T-cell (primary cell): ENCODE measurements at regions of chr5 and their contacts with region 1.

Region 1: DNA sequence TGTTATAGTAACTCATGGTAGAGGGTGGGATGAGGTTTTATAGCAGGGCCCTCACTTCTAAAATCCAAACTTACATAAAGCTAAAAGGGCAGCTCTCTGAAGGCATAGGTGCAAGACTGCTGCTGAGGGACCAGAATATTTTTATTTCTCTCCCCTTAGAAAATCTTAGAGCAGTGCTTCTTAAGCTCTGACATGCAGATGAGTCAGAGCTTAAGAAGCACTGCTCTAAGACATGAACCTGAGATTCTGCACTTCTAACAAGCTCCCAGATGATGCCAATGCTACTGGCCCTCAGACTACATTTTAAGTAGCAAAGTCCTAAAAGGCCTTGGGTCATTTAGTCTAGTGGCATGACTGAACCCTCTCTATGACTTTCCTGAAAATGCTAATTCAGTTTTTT is 97.6 kb upstream of the SPRY4 start:
- DNase-seq: no peak
- ATAC-seq: peak in 1 of 4 experiments; percentile 24
- H3K4me3 ChIP-seq: no peak overlapping the region
- H3K4me3 Mint-ChIP-seq: no peak overlapping the region
- H3K27ac ChIP-seq: no peak overlapping the region
- H3K27ac Mint-ChIP-seq: no peak overlapping the region
- H3K4me1 ChIP-seq: peaks cover 42 to 45% of the 10 kb centered on the region in 2 experiments
- H3K4me1 Mint-ChIP-seq: peaks cover 52 to 79% (median 52%) of the 10 kb centered on the region in 3 donors
- H3K27me3 ChIP-seq: no peaks in the 10 kb centered on the region
- H3K27me3 Mint-ChIP-seq: no peaks in the 10 kb centered on the region

Region 2: GRCh38 chr5:142405814-142406390 is 16.5 kb before region 1 on chr5:
- CTCF ChIA-PET with region 1: interaction called in 1 of 2 experiments, 3 read pairs
- POLR2A ChIA-PET with region 1: interaction called in 1 of 2 experiments, 10 read pairs
- DNase-seq: no peak
- ATAC-seq: no peak
- H3K4me3 ChIP-seq: no peak overlapping the region
- H3K4me3 Mint-ChIP-seq: no peak overlapping the region
- H3K27ac ChIP-seq: no peak overlapping the region
- H3K27ac Mint-ChIP-seq: no peak overlapping the region
- H3K4me1 ChIP-seq: no peaks in the 10 kb centered on the region
- H3K4me1 Mint-ChIP-seq: peaks cover 0 to 4% (median 0%) of the 10 kb centered on the region in 3 donors
- H3K27me3 ChIP-seq: peaks cover 0 to 11% of the 10 kb centered on the region in 2 experiments
- H3K27me3 Mint-ChIP-seq: peaks cover 0 to 1% of the 10 kb centered on the region in 2 donors

Region 3: GRCh38 chr5:142435410-142436115 is 13.1 kb after region 1 on chr5:
- CTCF ChIA-PET with region 1: interaction called in 1 of 2 experiments, 3 read pairs
- POLR2A ChIA-PET with region 1: interaction called, 7 to 10 read pairs
- DNase-seq: no peak
- ATAC-seq: no peak
- H3K4me3 ChIP-seq: no peak overlapping the region
- H3K4me3 Mint-ChIP-seq: no peak overlapping the region
- H3K27ac ChIP-seq: no peak overlapping the region
- H3K27ac Mint-ChIP-seq: no peak overlapping the region
- H3K4me1 ChIP-seq: peaks cover 17 to 42% of the 10 kb centered on the region in 2 experiments
- H3K4me1 Mint-ChIP-seq: peaks cover 48 to 55% (median 55%) of the 10 kb centered on the region in 3 donors
- H3K27me3 ChIP-seq: no peaks in the 10 kb centered on the region
- H3K27me3 Mint-ChIP-seq: no peaks in the 10 kb centered on the region